ENCODE measurements at regions of chr3 and their contacts with region 1.

Region 1: DNA sequence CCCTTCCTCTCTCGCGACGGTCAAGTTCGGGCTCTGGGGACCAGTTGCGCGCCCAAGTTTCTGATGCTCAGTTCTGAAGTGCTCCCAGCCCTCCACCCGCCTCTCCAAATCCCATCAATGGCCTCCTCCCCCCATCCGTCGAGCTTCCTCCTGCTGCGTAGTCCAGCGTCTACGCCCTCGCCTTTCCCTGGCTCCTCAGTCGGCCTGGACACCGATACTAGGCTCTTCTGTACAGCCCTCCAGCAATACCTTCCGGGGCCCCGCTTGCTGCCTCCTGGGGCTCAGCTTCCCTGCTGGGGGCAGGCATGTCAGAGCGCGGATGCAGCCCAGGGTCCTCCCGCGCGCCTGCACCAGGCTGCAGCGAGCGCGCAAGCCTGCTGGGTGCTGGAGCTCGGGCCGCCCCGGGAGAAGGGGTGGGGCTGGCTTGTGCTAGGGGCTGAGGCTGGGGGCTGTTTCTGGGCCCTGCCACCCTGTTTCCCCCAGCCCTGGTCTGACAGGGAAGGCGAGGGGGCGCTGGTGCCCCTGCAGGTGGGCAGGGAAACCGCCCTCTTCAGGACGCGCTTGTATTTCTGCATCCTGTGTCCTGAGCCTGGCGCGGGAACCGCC is 353.3 kb upstream of the SUCLG2 start:
- DNase-seq: peak in 1 of 2 donors; percentile 62
- H3K4me3 ChIP-seq: peak overlapping the region; percentile 53 to 64
- H3K27ac ChIP-seq: peak overlapping the region; percentile 42 to 49
- H3K4me1 ChIP-seq: peaks cover 0 to 5% of the 10 kb centered on the region in 2 donors
- H3K27me3 ChIP-seq: no peaks in the 10 kb centered on the region
- CTCF ChIP-seq: peak in 1 of 3 experiments; percentile 35

Region 2: GRCh38 chr3:68057637-68058320 is 50.1 kb after region 1 on chr3:
- intact Hi-C with region 1: loop called (anchors 5 kb)
- DNase-seq: no peak
- H3K4me3 ChIP-seq: no peak overlapping the region
- H3K27ac ChIP-seq: no peak overlapping the region
- H3K4me1 ChIP-seq: no peaks in the 10 kb centered on the region
- H3K27me3 ChIP-seq: no peaks in the 10 kb centered on the region
- CTCF ChIP-seq: no peak

Region 3: DNA sequence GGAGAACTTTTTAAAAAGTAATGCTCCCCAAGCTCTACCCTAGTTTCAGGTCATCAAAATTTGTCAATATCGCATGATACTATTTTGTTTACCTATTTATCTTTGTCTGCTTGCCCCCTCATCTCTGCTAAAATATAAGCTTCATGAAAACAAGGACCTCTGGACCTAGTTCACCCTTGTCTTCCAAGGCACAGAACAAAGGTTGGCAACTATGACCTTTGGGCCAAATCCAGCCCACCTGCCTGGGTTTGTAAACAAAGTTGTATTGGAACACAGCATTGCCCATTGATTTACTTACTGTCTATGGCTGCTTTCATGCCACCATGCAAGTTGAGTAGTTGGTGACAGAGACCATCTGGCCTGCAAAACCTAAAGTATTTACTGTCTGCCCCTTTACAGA is 108.9 kb after region 1 on chr3:
- intact Hi-C with region 1: loop called (anchors 5 kb)
- DNase-seq: no peak
- H3K4me3 ChIP-seq: no peak overlapping the region
- H3K27ac ChIP-seq: no peak overlapping the region
- H3K4me1 ChIP-seq: no peaks in the 10 kb centered on the region
- H3K27me3 ChIP-seq: no peaks in the 10 kb centered on the region
- CTCF ChIP-seq: no peak